Natural killer cell (primary cell): ENCODE measurements at regions of chr7 and their contacts with region 1.

Region 1: GRCh38 chr7:36389371-36390198 is at the start of gene ANLN:
- DNase-seq: peak; percentile 87 to 93
- ATAC-seq: peak; percentile 96 to 98 (median 97)
- H3K4me3 ChIP-seq: peak within 1 kb of the TSS; percentile 77
- H3K4me3 Mint-ChIP-seq: peak within 1 kb of the TSS; percentile 79
- H3K27ac ChIP-seq: peak within 1 kb of the TSS; percentile 80
- H3K27ac Mint-ChIP-seq: peak within 1 kb of the TSS; percentile 52 to 81
- H3K4me1 ChIP-seq: peaks cover 12% of the 10 kb centered on the region
- H3K4me1 Mint-ChIP-seq: peaks cover 21 to 22% of the 10 kb centered on the region in 2 donors
- H3K27me3 ChIP-seq: no peaks in the 10 kb centered on the region
- H3K27me3 Mint-ChIP-seq: no peaks in the 10 kb centered on the region
- CTCF ChIP-seq: no peak
- total RNA-seq, gene ANLN: 1.7 to 2.9 (median 2.0) TPM

Region 2: DNA sequence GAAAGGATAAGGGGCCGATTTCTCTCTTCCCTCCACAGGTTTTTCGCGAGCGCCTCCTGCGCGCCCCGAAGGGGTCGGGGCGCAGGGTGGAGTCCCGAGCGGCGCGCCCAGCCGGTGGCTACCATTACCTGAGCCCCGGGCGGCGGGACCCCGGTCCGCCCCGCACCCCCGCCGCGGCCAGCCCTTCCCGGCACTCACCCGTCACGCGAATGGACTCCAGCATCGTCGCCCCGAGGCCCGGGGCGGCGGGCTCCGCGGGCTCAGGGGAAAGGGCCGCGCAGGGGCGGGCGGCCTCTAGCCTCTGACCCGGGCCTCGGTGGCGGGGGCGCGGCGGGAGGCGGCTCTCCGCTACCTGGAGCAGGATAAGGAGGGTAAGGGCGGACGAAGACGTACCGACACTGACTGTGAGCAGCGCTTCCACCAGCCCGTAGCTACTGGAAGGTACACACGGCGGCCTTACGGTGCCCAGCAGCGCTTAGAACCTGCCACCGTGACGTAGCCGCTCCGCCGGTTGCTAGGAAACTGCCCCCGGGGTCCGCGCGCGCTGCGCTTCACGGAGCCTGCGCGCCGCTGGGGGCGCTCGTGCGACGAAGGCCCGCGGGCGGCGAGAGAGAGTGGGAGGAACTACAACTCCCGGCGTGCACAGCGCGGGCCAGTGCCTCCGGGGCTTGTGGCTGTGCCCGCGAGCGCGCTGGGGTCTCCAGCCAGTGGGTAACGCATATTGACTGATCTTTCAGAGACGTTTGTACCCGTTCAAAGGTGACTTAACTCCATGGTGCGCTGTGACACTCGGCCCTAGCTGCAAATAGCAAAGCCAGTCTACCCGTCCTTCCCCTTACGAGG is 22.6 kb before region 1 on chr7:
- intact Hi-C with region 1: loop called (anchors 1 kb)
- DNase-seq: peak; percentile 90 to 97
- ATAC-seq: peak; percentile 97 to 99 (median 97)
- H3K4me3 ChIP-seq: peak overlapping the region; percentile 69
- H3K4me3 Mint-ChIP-seq: peak overlapping the region; percentile 91
- H3K27ac ChIP-seq: no peak overlapping the region
- H3K27ac Mint-ChIP-seq: peak overlapping the region in 1 of 2 donors; percentile 78
- H3K4me1 ChIP-seq: peaks cover 6% of the 10 kb centered on the region
- H3K4me1 Mint-ChIP-seq: no peaks in the 10 kb centered on the region
- H3K27me3 ChIP-seq: peaks cover 4% of the 10 kb centered on the region
- H3K27me3 Mint-ChIP-seq: peaks cover 14 to 17% of the 10 kb centered on the region in 2 donors
- CTCF ChIP-seq: peak; percentile 85